CD4-positive, alpha-beta T cell (primary cell): ENCODE measurements at regions of chr21 and their contacts with region 1.

Region 1: DNA sequence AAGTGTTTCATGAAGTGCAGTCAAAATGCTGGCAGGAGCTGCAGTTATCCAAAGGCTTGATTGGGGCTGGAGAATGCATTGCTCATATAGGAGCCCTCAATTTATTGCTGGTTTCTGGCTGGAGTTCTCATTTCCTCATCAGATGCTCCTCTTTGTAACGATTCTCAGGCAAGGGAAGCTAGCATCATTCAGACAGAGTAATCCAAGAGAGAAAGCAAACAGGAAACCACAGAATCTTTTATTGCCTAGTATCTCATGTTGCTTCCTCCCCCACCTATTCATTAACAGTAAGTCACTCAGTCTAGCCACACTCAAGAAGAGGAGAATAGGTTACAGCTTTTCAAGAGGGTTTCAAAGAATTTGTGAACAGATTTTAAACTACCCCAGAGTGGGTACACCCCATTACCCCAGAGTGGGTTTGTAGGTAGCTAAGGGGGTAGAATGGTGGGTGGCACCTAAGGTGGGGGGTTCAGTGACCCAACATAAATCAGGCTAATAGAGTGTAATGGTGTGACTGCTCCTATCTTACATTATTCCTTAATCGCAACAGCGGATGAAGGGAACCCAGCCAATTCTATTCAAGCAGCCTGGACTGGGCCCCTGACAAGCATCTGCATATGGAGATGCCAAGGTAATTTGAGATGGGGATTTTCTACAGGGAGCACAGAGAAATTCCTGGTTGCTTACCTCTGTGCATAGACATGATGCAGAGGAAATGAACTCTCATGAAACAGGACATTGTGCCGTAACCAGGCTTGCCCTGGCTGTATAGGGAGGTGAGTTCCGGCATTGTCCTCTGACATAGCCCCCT is 67.1 kb downstream of the KCNJ15 start:
- DNase-seq: peak in 4 of 14 experiments; percentile 19 to 57 (median 48)
- ATAC-seq: peak; percentile 97
- H3K4me3 ChIP-seq: no peak overlapping the region
- H3K4me3 Mint-ChIP-seq: peak overlapping the region; percentile 34
- H3K27ac ChIP-seq: peak overlapping the region; percentile 7 to 11
- H3K27ac Mint-ChIP-seq: peak overlapping the region; percentile 76
- H3K4me1 ChIP-seq: peaks cover 21% of the 10 kb centered on the region
- H3K4me1 Mint-ChIP-seq: peaks cover 37% of the 10 kb centered on the region
- H3K27me3 ChIP-seq: no peaks in the 10 kb centered on the region
- H3K27me3 Mint-ChIP-seq: no peaks in the 10 kb centered on the region
- CTCF ChIP-seq: no peak

Region 2: GRCh38 chr21:37878946-37879660 is 444.8 kb before region 1 on chr21:
- CTCF ChIA-PET with region 1: no interaction called
- POLR2A ChIA-PET with region 1: no interaction called
- intact Hi-C with region 1: no loop called
- DNase-seq: no peak
- ATAC-seq: no peak
- H3K4me3 ChIP-seq: no peak overlapping the region
- H3K4me3 Mint-ChIP-seq: no peak overlapping the region
- H3K27ac ChIP-seq: no peak overlapping the region
- H3K27ac Mint-ChIP-seq: no peak overlapping the region
- H3K4me1 ChIP-seq: no peaks in the 10 kb centered on the region
- H3K4me1 Mint-ChIP-seq: no peaks in the 10 kb centered on the region
- H3K27me3 ChIP-seq: peaks cover 0 to 2% of the 10 kb centered on the region in 2 experiments
- H3K27me3 Mint-ChIP-seq: peaks cover 5% of the 10 kb centered on the region
- CTCF ChIP-seq: no peak

Region 3: GRCh38 chr21:38244885-38245545 is 78.9 kb before region 1 on chr21:
- CTCF ChIA-PET with region 1: no interaction called
- POLR2A ChIA-PET with region 1: no interaction called
- intact Hi-C with region 1: loop called in 1 of 2 experiments (anchors 1 kb)
- DNase-seq: peak; percentile 26 to 85 (median 56)
- ATAC-seq: peak; percentile 94
- H3K4me3 ChIP-seq: no peak overlapping the region
- H3K4me3 Mint-ChIP-seq: peak overlapping the region; percentile 1
- H3K27ac ChIP-seq: no peak overlapping the region
- H3K27ac Mint-ChIP-seq: peak overlapping the region; percentile 73
- H3K4me1 ChIP-seq: peaks cover 13% of the 10 kb centered on the region
- H3K4me1 Mint-ChIP-seq: peaks cover 20% of the 10 kb centered on the region
- H3K27me3 ChIP-seq: no peaks in the 10 kb centered on the region
- H3K27me3 Mint-ChIP-seq: no peaks in the 10 kb centered on the region
- CTCF ChIP-seq: no peak